IMR-90 (cell line): ENCODE measurements at regions of chr1 and their contacts with region 1.

Region 1: GRCh38 chr1:223683586-223684487 is 18.3 kb upstream of the CAPN8 start:
- DNase-seq: peak; percentile 60
- ATAC-seq: peak; percentile 88
- H3K4me3 ChIP-seq: no peak overlapping the region
- H3K27ac ChIP-seq: no peak overlapping the region
- H3K4me1 ChIP-seq: no peaks in the 10 kb centered on the region
- H3K27me3 ChIP-seq: peaks cover 30% of the 10 kb centered on the region
- CTCF ChIP-seq: peak; percentile 84
- POLR2A ChIP-seq: no peak
- RAD21 ChIP-seq: peak; percentile 91

Region 2: DNA sequence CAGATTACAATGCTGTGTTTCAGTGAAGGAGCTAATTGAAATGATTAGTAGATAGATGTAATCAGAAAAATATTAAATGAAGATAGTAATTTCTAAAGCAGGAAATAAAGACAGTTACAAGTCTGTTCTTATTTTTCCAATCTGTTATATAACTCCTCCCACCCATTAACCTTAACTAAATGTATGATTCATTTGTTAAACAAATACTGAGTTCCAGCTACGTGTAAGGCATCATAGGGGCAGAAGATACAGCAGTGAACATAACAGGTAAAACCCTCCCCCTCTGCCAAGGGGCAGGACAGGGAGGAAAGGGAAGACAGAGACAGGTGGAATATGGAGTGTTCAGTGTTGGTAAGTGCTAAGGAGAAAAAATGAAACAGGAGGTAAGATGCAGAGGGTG is 946.9 kb before region 1 on chr1 and contains the start of gene FAM177B:
- CTCF ChIA-PET with region 1: no interaction called
- POLR2A ChIA-PET with region 1: no interaction called
- dilution Hi-C with region 1: no loop called
- in situ Hi-C with region 1: no loop called
- intact Hi-C with region 1: loop called (anchors 1 kb)
- DNase-seq: peak; percentile 21
- ATAC-seq: peak; percentile 27; the same call in 1 of the 2 replicates
- H3K4me3 ChIP-seq: no peak within 1 kb of the TSS
- H3K27ac ChIP-seq: no peak within 1 kb of the TSS
- H3K4me1 ChIP-seq: peaks cover 6% of the 10 kb centered on the region
- H3K27me3 ChIP-seq: no peaks in the 10 kb centered on the region
- CTCF ChIP-seq: no peak
- POLR2A ChIP-seq: no peak
- RAD21 ChIP-seq: no peak
- total RNA-seq, gene FAM177B: not detected in 2 replicates

Region 3: GRCh38 chr1:222909586-222909985 is 774.3 kb before region 1 on chr1:
- CTCF ChIA-PET with region 1: interaction called, 11 read pairs
- POLR2A ChIA-PET with region 1: no interaction called
- dilution Hi-C with region 1: no loop called
- in situ Hi-C with region 1: no loop called
- intact Hi-C with region 1: no loop called
- DNase-seq: peak; percentile 72
- ATAC-seq: peak; percentile 30; the same call in 1 of the 2 replicates
- H3K4me3 ChIP-seq: no peak overlapping the region
- H3K27ac ChIP-seq: no peak overlapping the region
- H3K4me1 ChIP-seq: peaks cover 3% of the 10 kb centered on the region; the same call in 1 of the 2 replicates
- H3K27me3 ChIP-seq: no peaks in the 10 kb centered on the region
- CTCF ChIP-seq: no peak
- POLR2A ChIP-seq: no peak
- RAD21 ChIP-seq: no peak

Region 4: DNA sequence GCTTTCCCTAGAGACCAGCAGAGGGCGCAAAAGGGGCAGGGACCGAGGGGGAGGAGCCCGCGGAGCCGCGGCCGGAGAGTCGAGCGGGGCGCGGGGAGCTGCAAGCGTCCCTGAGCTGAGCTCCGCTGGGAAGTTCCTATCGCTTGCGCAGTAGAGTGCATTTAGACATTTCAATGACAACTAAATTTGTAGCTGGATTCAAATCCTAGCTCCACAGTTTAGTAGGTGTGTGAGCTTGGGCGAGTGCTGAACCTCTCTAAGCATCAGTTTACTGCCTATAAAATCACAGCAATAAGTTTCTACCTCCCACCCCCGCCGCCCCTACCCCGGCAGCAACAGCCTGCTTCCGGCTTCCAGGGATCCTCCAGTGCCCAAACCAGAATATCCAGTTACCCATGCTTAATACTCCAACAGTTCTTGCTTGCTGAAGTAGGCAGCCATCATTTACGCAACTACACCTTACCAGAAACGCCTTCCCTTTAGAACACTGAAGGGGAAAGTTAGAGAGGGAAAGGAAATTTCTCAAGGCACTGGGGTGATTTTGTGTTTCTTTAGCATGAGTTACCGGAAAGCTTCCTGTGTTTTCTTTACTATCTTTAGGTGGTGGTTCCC is 549.9 kb before region 1 on chr1:
- CTCF ChIA-PET with region 1: interaction called, 11 read pairs
- POLR2A ChIA-PET with region 1: no interaction called
- dilution Hi-C with region 1: no loop called
- in situ Hi-C with region 1: loop called (anchors 5 kb)
- intact Hi-C with region 1: loop called (anchors 1 kb)
- DNase-seq: peak; percentile 78
- ATAC-seq: peak; percentile 97
- H3K4me3 ChIP-seq: peak overlapping the region; percentile 17; the same call in 1 of the 2 replicates
- H3K27ac ChIP-seq: no peak overlapping the region
- H3K4me1 ChIP-seq: no peaks in the 10 kb centered on the region; the same call in 1 of the 2 replicates
- H3K27me3 ChIP-seq: peaks cover 36% of the 10 kb centered on the region
- CTCF ChIP-seq: peak; percentile 93
- POLR2A ChIP-seq: no peak
- RAD21 ChIP-seq: peak; percentile 82

Region 5: GRCh38 chr1:223531742-223532341 is 152.0 kb before region 1 on chr1:
- CTCF ChIA-PET with region 1: no interaction called
- POLR2A ChIA-PET with region 1: no interaction called
- dilution Hi-C with region 1: no loop called
- in situ Hi-C with region 1: no loop called
- intact Hi-C with region 1: loop called (anchors 2 kb)
- DNase-seq: peak; percentile 19
- ATAC-seq: no peak
- H3K4me3 ChIP-seq: no peak overlapping the region
- H3K27ac ChIP-seq: no peak overlapping the region
- H3K4me1 ChIP-seq: no peaks in the 10 kb centered on the region
- H3K27me3 ChIP-seq: peaks cover 7% of the 10 kb centered on the region
- CTCF ChIP-seq: peak; percentile 53
- POLR2A ChIP-seq: no peak
- RAD21 ChIP-seq: peak; percentile 54

Region 6: GRCh38 chr1:223831755-223832636 is 148.2 kb after region 1 on chr1:
- CTCF ChIA-PET with region 1: no interaction called
- POLR2A ChIA-PET with region 1: no interaction called
- dilution Hi-C with region 1: no loop called
- in situ Hi-C with region 1: no loop called
- intact Hi-C with region 1: no loop called
- DNase-seq: peak; percentile 88
- ATAC-seq: peak; percentile 27
- H3K4me3 ChIP-seq: no peak overlapping the region
- H3K27ac ChIP-seq: peak overlapping the region; percentile 80
- H3K4me1 ChIP-seq: peaks cover 24% of the 10 kb centered on the region
- H3K27me3 ChIP-seq: no peaks in the 10 kb centered on the region
- CTCF ChIP-seq: no peak
- POLR2A ChIP-seq: no peak
- RAD21 ChIP-seq: no peak